ENCODE measurements at regions of chr2 and their contacts with region 1.

Region 1: GRCh38 chr2:9984871-9985480 is 33.5 kb downstream of the GRHL1 start:
- DNase-seq: no peak
- H3K4me3 ChIP-seq: no peak overlapping the region
- H3K27ac ChIP-seq: peak overlapping the region in 4 of 5 donors; percentile 42 to 65 (median 54)
- H3K4me1 ChIP-seq: peaks cover 11 to 21% (median 16%) of the 10 kb centered on the region in 4 donors
- H3K27me3 ChIP-seq: no peaks in the 10 kb centered on the region
- CTCF ChIP-seq: no peak
- EP300 ChIP-seq: no peak
- POLR2A ChIP-seq: no peak

Region 2: GRCh38 chr2:10036095-10036884 is 51.3 kb after region 1 on chr2:
- intact Hi-C with region 1: no loop called
- DNase-seq: peak; percentile 75 to 91
- H3K4me3 ChIP-seq: no peak overlapping the region
- H3K27ac ChIP-seq: peak overlapping the region; percentile 0 to 99 (median 74)
- H3K4me1 ChIP-seq: peaks cover 20 to 67% (median 53%) of the 10 kb centered on the region in 4 donors
- H3K27me3 ChIP-seq: no peaks in the 10 kb centered on the region
- CTCF ChIP-seq: peak in 4 of 7 experiments; percentile 36 to 48 (median 42)
- EP300 ChIP-seq: no peak
- POLR2A ChIP-seq: no peak

Region 3: DNA sequence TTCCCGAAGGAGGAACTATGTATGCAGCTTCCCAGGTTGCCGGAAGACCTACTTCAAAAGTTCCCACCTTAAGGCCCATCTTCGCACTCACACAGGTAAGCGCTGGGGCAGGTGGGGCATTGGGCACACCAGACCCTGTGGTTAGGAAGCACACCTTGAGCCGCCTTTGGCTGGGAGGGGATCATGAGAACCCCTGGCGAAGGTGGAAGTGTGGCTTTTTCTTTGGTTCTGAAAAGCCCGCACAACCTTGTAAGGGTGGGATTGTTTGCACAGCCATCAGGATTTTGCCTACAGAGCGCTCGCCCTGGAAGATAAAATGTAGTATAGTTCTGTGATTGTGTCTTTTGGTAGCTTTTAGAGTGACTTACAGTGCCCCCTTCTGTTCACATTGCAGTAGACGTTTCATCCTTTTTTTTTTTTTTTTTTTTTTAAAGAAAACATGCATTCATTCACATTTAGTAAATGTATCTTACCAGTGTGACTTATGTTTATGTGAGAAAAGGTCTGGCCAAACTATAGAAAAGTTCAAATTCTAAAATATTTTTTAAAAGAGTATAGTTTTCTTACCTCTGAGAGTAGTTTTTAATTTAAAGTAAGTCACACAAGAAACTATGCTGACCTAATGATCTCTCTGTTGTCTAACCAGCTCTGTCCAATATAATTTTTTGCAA is 63.7 kb after region 1 on chr2:
- intact Hi-C with region 1: loop called (anchors 5 kb)
- DNase-seq: peak in 1 of 2 donors; percentile 88
- H3K4me3 ChIP-seq: peak overlapping the region in 1 of 4 donors; percentile 32
- H3K27ac ChIP-seq: peak overlapping the region in 3 of 5 donors; percentile 3 to 99 (median 26)
- H3K4me1 ChIP-seq: peaks cover 53 to 80% (median 72%) of the 10 kb centered on the region in 4 donors
- H3K27me3 ChIP-seq: no peaks in the 10 kb centered on the region
- CTCF ChIP-seq: peak in 5 of 7 experiments; percentile 35 to 68 (median 39)
- EP300 ChIP-seq: no peak
- POLR2A ChIP-seq: no peak

Measured in stomach (tissue), 19 donors.